Endothelial cell of umbilical vein (primary cell): ENCODE measurements at regions of chr6 and their contacts with region 1.

Region 1: GRCh38 chr6:127120787-127121636 is 2.5 kb downstream of the RSPO3 start:
- DNase-seq: peak; percentile 88
- H3K4me3 ChIP-seq: peak overlapping the region; percentile 31 to 73 (median 59)
- H3K27ac ChIP-seq: no peak overlapping the region
- H3K4me1 ChIP-seq: peaks cover 19% of the 10 kb centered on the region
- H3K27me3 ChIP-seq: no peaks in the 10 kb centered on the region
- CTCF ChIP-seq: peak; percentile 83 to 89
- POLR2A ChIP-seq: no peak

Region 2: GRCh38 chr6:125995972-125996580 is 1124.9 kb before region 1 on chr6:
- CTCF ChIA-PET with region 1: interaction called, 8 read pairs
- POLR2A ChIA-PET with region 1: no interaction called
- dilution Hi-C with region 1: no loop called
- intact Hi-C with region 1: loop called (anchors 1 kb)
- DNase-seq: peak; percentile 74
- H3K4me3 ChIP-seq: no peak overlapping the region
- H3K27ac ChIP-seq: no peak overlapping the region
- H3K4me1 ChIP-seq: no peaks in the 10 kb centered on the region
- H3K27me3 ChIP-seq: no peaks in the 10 kb centered on the region
- CTCF ChIP-seq: peak; percentile 84 to 97
- POLR2A ChIP-seq: no peak

Region 3: GRCh38 chr6:126127659-126128058 is 993.4 kb before region 1 on chr6:
- CTCF ChIA-PET with region 1: no interaction called
- POLR2A ChIA-PET with region 1: no interaction called
- dilution Hi-C with region 1: no loop called
- intact Hi-C with region 1: loop called (anchors 2 kb)
- DNase-seq: no peak
- H3K4me3 ChIP-seq: no peak overlapping the region
- H3K27ac ChIP-seq: no peak overlapping the region
- H3K4me1 ChIP-seq: no peaks in the 10 kb centered on the region
- H3K27me3 ChIP-seq: no peaks in the 10 kb centered on the region
- CTCF ChIP-seq: no peak
- POLR2A ChIP-seq: no peak

Region 4: DNA sequence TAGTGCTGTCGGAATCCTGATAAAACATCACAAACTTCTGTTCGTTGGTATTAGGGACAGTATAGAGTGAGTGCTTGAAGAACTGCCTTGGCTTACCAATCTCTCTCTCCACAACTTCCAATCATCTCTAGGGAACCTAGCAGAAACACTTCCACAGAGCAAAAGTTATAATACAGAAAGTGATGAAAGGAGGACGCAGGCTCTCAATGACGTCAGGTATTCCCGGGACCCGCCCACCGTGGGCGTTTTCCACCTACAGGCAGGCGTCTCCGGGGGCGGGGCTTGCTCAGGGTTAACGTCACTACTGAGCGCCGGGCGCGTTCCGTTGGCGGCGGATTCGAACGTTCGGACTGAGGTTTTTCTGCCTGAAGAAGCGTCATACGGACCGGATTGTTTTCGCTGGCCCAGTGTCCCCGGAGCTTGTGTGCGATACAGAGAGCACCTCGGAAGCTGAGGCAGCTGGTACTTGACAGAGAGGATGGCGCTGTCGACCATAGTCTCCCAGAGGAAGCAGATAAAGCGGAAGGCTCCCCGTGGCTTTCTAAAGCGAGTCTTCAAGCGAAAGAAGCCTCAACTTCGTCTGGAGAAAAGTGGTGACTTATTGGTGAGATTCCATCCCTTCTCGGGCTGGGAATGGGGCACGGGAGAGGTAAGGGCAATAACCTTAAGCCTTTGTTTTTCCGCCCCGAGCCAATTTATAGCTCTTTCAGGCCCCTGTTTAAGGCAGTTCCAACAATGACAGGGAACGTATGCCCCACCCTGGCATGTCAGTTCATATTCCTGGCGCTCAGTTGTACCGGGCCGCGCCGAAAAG is 781.0 kb before region 1 on chr6 and contains the start of gene CENPW:
- CTCF ChIA-PET with region 1: no interaction called
- POLR2A ChIA-PET with region 1: no interaction called
- dilution Hi-C with region 1: no loop called
- intact Hi-C with region 1: loop called (anchors 5 kb)
- DNase-seq: peak; percentile 92
- H3K4me3 ChIP-seq: peak within 1 kb of the TSS; percentile 62 to 99 (median 98)
- H3K27ac ChIP-seq: peak within 1 kb of the TSS; percentile 61
- H3K4me1 ChIP-seq: peaks cover 15% of the 10 kb centered on the region
- H3K27me3 ChIP-seq: peaks cover 0 to 2% of the 10 kb centered on the region in 2 experiments
- CTCF ChIP-seq: no peak
- POLR2A ChIP-seq: peak; percentile 56
- total RNA-seq, gene CENPW: 82.7 and 85.8 TPM in 2 replicates

Region 5: GRCh38 chr6:126657561-126658175 is 463.3 kb before region 1 on chr6:
- CTCF ChIA-PET with region 1: interaction called, 7 read pairs
- POLR2A ChIA-PET with region 1: no interaction called
- dilution Hi-C with region 1: no loop called
- intact Hi-C with region 1: loop called (anchors 1 kb)
- DNase-seq: peak; percentile 56
- H3K4me3 ChIP-seq: no peak overlapping the region
- H3K27ac ChIP-seq: no peak overlapping the region
- H3K4me1 ChIP-seq: no peaks in the 10 kb centered on the region
- H3K27me3 ChIP-seq: no peaks in the 10 kb centered on the region
- CTCF ChIP-seq: peak; percentile 36 to 41
- POLR2A ChIP-seq: no peak

Region 6: DNA sequence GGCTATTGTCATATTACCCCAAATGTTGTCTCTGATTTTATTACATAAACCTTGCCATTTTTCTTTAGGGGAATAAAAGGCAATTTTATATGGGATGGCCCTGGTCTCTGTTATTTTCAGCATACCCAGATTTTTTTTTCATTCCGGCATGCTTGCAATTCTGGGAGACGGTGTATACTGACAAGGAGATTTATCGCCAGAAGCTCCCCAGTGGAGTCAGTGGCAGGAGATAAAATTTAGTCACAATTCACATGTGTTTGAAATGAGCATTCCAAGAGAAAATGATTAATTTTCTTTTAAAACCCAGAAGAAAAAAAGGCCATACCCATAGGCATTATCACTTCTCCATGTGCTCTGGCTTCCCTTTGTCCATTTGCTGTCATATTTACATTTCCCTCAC is 253.4 kb before region 1 on chr6:
- CTCF ChIA-PET with region 1: no interaction called
- POLR2A ChIA-PET with region 1: no interaction called
- dilution Hi-C with region 1: no loop called
- intact Hi-C with region 1: no loop called
- DNase-seq: no peak
- H3K4me3 ChIP-seq: no peak overlapping the region
- H3K27ac ChIP-seq: no peak overlapping the region
- H3K4me1 ChIP-seq: no peaks in the 10 kb centered on the region
- H3K27me3 ChIP-seq: no peaks in the 10 kb centered on the region
- CTCF ChIP-seq: no peak
- POLR2A ChIP-seq: no peak

Region 7: DNA sequence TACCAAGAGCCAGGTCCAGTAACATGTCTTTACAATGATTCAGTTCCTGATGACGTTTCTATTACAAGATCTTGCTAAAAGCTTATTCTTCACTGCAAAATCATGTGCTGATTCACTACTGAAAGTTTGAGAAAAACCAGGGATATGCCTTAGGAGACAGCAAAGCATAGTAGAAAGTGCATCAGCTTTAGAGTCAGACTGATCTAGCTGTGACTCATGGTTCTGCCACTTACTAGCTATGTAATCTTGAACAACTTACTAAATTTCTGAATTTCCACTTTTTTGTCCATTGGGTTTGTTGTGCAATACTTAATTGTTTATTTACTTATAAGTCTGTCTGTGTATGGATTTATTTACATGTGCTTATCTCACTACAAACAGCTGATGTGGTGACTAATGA is 201.1 kb before region 1 on chr6:
- CTCF ChIA-PET with region 1: no interaction called
- POLR2A ChIA-PET with region 1: no interaction called
- dilution Hi-C with region 1: no loop called
- intact Hi-C with region 1: loop called (anchors 2 kb)
- DNase-seq: peak; percentile 79
- H3K4me3 ChIP-seq: no peak overlapping the region
- H3K27ac ChIP-seq: peak overlapping the region; percentile 68
- H3K4me1 ChIP-seq: peaks cover 49% of the 10 kb centered on the region
- H3K27me3 ChIP-seq: no peaks in the 10 kb centered on the region
- CTCF ChIP-seq: no peak
- POLR2A ChIP-seq: no peak

Region 8: GRCh38 chr6:127186889-127187288 is 65.9 kb after region 1 on chr6:
- CTCF ChIA-PET with region 1: interaction called, 33 read pairs
- POLR2A ChIA-PET with region 1: no interaction called
- dilution Hi-C with region 1: no loop called
- intact Hi-C with region 1: loop called (anchors 1 kb)
- DNase-seq: no peak
- H3K4me3 ChIP-seq: no peak overlapping the region
- H3K27ac ChIP-seq: no peak overlapping the region
- H3K4me1 ChIP-seq: no peaks in the 10 kb centered on the region
- H3K27me3 ChIP-seq: no peaks in the 10 kb centered on the region
- CTCF ChIP-seq: peak in 1 of 2 donors; percentile 24
- POLR2A ChIP-seq: no peak